ENCODE measurements at regions of chr2 and their contacts with region 1.

Region 1: DNA sequence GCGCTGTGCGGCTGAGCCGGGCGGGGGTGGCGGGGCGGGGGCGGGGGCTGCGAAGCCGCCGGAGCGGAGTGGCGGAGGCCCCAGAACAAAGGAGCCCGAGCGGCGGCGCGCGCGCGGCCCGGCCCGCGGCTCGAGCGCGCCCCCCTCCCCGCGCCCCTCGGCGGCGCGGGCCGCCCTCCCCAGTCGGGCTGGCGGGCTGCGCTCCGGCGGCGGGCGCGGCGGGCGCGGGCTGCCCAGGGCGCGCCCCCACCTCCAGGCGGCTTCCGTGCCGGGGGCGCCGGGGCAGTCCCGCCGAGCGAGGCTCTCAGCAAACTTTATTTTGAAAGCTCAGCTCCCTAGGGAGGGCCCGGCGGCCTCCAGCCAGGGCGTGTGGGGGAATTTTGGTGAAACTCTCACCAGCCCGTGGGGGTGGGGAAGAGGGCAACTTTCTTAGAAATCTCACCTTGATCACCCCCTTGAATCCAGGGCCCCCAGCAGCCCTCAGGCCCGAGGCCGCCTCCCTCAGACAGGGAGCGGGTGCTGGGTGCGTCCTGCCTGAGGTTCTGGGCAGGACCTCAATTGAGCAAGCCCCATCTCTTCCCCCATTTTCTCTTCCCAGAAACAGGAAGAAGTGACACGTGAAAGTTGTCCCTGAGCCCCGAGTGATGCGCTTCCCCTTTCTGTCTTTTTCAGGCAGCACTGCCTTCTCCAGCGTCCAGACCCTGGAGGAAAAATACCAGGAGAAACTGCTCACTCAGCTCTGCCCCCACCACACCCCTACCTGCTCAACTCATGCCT is 786 bp downstream of the TET3 start:
- DNase-seq: peak in 10 of 14 experiments; percentile 21 to 84 (median 38)
- ATAC-seq: peak; percentile 39
- H3K4me3 ChIP-seq: peak overlapping the region; percentile 80
- H3K4me3 Mint-ChIP-seq: peak overlapping the region; percentile 84
- H3K27ac ChIP-seq: peak overlapping the region; percentile 64 to 71
- H3K27ac Mint-ChIP-seq: peak overlapping the region; percentile 81
- H3K4me1 ChIP-seq: peaks cover 72% of the 10 kb centered on the region
- H3K4me1 Mint-ChIP-seq: peaks cover 80% of the 10 kb centered on the region
- H3K27me3 ChIP-seq: no peaks in the 10 kb centered on the region
- H3K27me3 Mint-ChIP-seq: no peaks in the 10 kb centered on the region
- CTCF ChIP-seq: no peak

Region 2: GRCh38 chr2:73926493-73927338 is 58.8 kb before region 1 on chr2 and contains the start of gene DGUOK:
- CTCF ChIA-PET with region 1: interaction called, 3 read pairs
- POLR2A ChIA-PET with region 1: interaction called, 15 read pairs
- intact Hi-C with region 1: loop called (anchors 1 to 5 kb)
- DNase-seq: peak; percentile 90 to 100 (median 94)
- ATAC-seq: peak; percentile 97
- H3K4me3 ChIP-seq: peak within 1 kb of the TSS; percentile 78
- H3K4me3 Mint-ChIP-seq: peak within 1 kb of the TSS; percentile 83
- H3K27ac ChIP-seq: peak within 1 kb of the TSS; percentile 97
- H3K27ac Mint-ChIP-seq: peak within 1 kb of the TSS; percentile 98
- H3K4me1 ChIP-seq: peaks cover 46% of the 10 kb centered on the region
- H3K4me1 Mint-ChIP-seq: peaks cover 53% of the 10 kb centered on the region
- H3K27me3 ChIP-seq: no peaks in the 10 kb centered on the region
- H3K27me3 Mint-ChIP-seq: no peaks in the 10 kb centered on the region
- CTCF ChIP-seq: no peak
- total RNA-seq, gene DGUOK: 30.5 to 32.0 TPM

Region 3: GRCh38 chr2:73949802-73950201 is 35.7 kb before region 1 on chr2:
- CTCF ChIA-PET with region 1: no interaction called
- POLR2A ChIA-PET with region 1: interaction called, 10 read pairs
- intact Hi-C with region 1: no loop called
- DNase-seq: no peak
- ATAC-seq: no peak
- H3K4me3 ChIP-seq: no peak overlapping the region
- H3K4me3 Mint-ChIP-seq: peak overlapping the region; percentile 23
- H3K27ac ChIP-seq: no peak overlapping the region
- H3K27ac Mint-ChIP-seq: peak overlapping the region; percentile 87
- H3K4me1 ChIP-seq: peaks cover 35% of the 10 kb centered on the region
- H3K4me1 Mint-ChIP-seq: peaks cover 83% of the 10 kb centered on the region
- H3K27me3 ChIP-seq: no peaks in the 10 kb centered on the region
- H3K27me3 Mint-ChIP-seq: no peaks in the 10 kb centered on the region
- CTCF ChIP-seq: no peak

Region 4: DNA sequence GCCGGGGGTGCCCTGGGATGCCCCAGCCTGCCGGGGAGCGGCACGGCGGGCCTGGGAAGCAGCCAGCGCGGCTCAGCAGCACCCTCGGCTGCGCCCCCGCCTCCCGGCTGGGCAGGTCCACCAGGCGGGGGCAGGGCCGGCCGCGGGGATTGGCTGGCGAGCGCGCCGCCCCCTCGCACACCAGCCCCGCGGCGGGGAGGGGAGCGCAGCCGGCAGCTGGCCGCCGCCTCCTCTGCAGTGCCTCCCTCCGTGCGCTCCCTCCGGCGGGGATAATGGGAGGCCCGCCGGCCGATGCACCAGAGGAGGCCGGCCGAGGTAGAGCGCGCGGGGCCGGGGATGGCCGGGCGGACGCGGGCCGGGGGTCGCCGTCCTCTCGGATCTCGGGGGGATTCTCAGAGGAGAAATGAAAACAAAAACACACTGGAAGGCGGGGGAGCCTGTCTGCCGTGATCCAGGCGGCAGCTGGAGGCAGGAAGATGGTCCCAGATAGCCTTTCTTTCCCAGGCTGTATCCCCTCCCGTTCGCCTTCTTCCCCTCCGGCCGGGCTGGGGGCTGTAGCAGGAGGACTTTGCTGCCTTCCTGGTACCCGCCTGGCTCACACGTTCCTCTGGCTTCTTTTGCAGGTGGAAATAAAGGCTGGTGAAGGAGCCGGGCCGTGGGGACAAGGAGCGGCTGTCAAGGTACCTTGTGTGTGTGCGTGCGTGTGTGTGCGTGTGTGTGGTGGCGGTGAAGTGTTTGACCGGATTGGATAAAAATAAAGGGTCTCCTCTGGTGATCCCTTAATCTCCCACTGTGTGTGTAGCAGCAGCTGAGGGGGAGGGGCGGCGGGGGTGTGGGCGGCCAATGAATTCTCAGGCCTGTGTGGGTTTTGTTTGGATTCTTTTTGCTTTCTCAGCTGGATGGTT is 17.2 kb after region 1 on chr2:
- CTCF ChIA-PET with region 1: interaction called, 8 read pairs
- POLR2A ChIA-PET with region 1: interaction called, 25 read pairs
- intact Hi-C with region 1: loop called (anchors 1 kb)
- DNase-seq: peak; percentile 53 to 92 (median 77)
- ATAC-seq: peak; percentile 85
- H3K4me3 ChIP-seq: peak overlapping the region; percentile 58
- H3K4me3 Mint-ChIP-seq: peak overlapping the region; percentile 90
- H3K27ac ChIP-seq: no peak overlapping the region
- H3K27ac Mint-ChIP-seq: peak overlapping the region; percentile 68
- H3K4me1 ChIP-seq: peaks cover 67% of the 10 kb centered on the region
- H3K4me1 Mint-ChIP-seq: peaks cover 77% of the 10 kb centered on the region
- H3K27me3 ChIP-seq: no peaks in the 10 kb centered on the region
- H3K27me3 Mint-ChIP-seq: no peaks in the 10 kb centered on the region
- CTCF ChIP-seq: no peak

Measured in CD4-positive, alpha-beta T cell (primary cell).